ENCODE measurements at regions of chr16 and their contacts with region 1.

Region 1: GRCh38 chr16:22321339-22322001 is 24.3 kb downstream of the POLR3E start:
- DNase-seq: peak; percentile 81
- H3K4me3 ChIP-seq: no peak overlapping the region
- H3K27ac ChIP-seq: peak overlapping the region; percentile 67
- H3K4me1 ChIP-seq: peaks cover 14% of the 10 kb centered on the region
- H3K27me3 ChIP-seq: no peaks in the 10 kb centered on the region
- CTCF ChIP-seq: peak; percentile 72 to 79
- POLR2A ChIP-seq: no peak

Region 2: DNA sequence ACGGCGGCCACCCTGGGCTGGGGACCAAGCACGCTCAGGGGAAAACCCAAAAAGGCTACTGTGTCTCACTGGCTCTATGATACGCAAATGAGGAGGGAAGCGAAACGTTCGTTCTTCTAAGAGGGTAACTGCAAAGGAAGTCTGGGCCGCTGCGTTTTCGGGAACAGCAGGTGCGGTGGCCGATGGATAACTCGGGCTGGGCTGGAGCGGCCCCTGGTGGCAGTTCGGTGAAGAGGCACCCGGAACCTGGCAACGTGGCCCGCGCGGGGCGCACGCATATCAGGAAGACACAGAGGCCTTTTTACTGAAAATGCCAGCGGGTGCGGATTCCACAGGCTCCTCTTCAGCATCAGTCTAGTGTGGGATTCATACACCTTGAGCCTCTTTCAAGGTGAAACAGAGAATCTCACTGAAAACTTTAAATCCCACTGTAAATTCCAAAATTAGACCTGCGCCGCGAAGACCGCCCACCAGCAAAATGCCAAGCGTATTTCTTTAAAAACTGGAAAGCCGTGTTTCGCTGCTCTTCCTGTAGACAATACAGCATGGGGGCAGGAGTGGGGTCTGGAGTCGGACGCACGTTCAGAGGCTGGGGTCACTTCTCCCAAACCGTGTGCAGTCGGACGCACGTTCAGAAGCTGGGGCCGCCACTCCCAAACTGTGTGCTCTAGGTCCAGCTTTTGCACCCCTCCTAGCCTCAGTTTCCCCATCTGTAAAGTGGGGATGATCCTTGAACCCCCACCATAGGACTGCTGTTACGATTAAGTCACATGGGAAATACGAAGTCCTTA is 766.5 kb before region 1 on chr16:
- CTCF ChIA-PET with region 1: interaction called, 3 read pairs
- POLR2A ChIA-PET with region 1: no interaction called
- dilution Hi-C with region 1: no loop called
- intact Hi-C with region 1: loop called (anchors 1 kb)
- DNase-seq: peak; percentile 66
- H3K4me3 ChIP-seq: no peak overlapping the region
- H3K27ac ChIP-seq: no peak overlapping the region
- H3K4me1 ChIP-seq: no peaks in the 10 kb centered on the region
- H3K27me3 ChIP-seq: peaks cover 0 to 3% of the 10 kb centered on the region in 2 experiments
- CTCF ChIP-seq: peak; percentile 96 to 100
- POLR2A ChIP-seq: no peak

Region 3: DNA sequence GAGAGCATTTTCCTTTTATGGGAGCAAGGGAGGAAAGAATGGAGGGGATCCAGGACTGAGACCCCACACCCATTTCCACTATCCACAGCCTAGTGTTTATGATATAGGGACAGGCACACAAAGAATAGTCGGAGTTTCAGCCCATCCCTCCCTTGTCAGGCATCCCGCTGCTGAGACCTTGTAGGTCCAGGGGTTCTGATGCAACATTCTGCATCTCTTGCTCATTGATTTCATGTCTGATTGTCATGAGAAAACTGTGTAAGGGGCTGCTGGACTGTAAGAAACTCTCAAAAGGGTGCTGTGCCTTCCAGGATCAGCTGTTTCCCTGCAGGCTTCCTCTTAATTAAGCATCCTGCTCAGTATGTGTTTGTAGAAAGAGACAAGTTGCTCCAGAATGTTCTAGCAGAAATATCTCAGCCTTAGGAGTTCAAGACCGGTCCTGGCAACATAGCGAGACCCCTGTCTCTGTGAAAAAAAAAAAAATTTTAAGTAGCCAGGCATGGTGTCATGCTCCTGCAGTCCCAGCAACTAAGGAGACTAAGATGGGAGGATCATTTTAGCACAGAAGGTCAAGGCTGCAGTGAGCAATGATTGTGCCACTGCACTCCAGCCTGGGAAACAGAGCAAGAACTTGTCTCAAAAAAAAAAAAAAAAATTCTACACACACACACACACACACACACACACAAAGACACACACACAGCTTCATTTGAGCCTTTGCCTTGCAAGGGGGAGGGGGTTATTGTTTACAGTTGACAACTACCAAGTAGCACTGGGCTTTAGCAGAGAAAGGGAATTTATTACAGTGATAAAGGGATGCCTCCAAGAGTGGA is 29.4 kb before region 1 on chr16:
- CTCF ChIA-PET with region 1: no interaction called
- POLR2A ChIA-PET with region 1: no interaction called
- dilution Hi-C with region 1: no loop called
- intact Hi-C with region 1: no loop called
- DNase-seq: no peak
- H3K4me3 ChIP-seq: no peak overlapping the region
- H3K27ac ChIP-seq: no peak overlapping the region
- H3K4me1 ChIP-seq: no peaks in the 10 kb centered on the region
- H3K27me3 ChIP-seq: no peaks in the 10 kb centered on the region
- CTCF ChIP-seq: no peak
- POLR2A ChIP-seq: no peak

Region 4: DNA sequence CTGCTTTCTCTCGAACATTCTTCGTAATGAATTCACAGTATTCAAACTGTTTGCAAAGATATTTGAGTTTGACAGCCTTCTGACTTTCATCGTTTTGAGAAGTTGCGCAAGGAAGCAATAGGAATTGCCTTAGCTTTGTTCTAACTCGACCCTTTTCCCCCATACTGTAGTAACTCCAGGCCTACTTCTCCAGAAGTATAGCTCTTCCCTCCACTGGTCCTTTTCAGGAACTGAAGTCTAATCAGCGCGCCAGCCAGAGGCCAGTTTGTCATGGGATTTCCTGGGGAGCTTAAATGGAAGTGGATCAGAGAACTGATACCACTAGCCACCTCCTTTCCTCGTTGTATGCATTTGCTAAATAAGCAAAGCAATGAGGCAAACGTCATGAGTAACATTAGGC is 25.0 kb after region 1 on chr16:
- CTCF ChIA-PET with region 1: interaction called, 10 read pairs
- POLR2A ChIA-PET with region 1: no interaction called
- dilution Hi-C with region 1: no loop called
- intact Hi-C with region 1: no loop called
- DNase-seq: peak; percentile 46
- H3K4me3 ChIP-seq: no peak overlapping the region
- H3K27ac ChIP-seq: no peak overlapping the region
- H3K4me1 ChIP-seq: no peaks in the 10 kb centered on the region
- H3K27me3 ChIP-seq: no peaks in the 10 kb centered on the region
- CTCF ChIP-seq: no peak
- POLR2A ChIP-seq: no peak

Region 5: GRCh38 chr16:22353191-22353919 is 31.9 kb after region 1 on chr16:
- CTCF ChIA-PET with region 1: interaction called, 13 read pairs
- POLR2A ChIA-PET with region 1: no interaction called
- dilution Hi-C with region 1: no loop called
- intact Hi-C with region 1: no loop called
- DNase-seq: peak; percentile 28
- H3K4me3 ChIP-seq: no peak overlapping the region
- H3K27ac ChIP-seq: no peak overlapping the region
- H3K4me1 ChIP-seq: peaks cover 9% of the 10 kb centered on the region
- H3K27me3 ChIP-seq: no peaks in the 10 kb centered on the region
- CTCF ChIP-seq: no peak
- POLR2A ChIP-seq: no peak

Region 6: GRCh38 chr16:22402191-22402590 is 80.7 kb after region 1 on chr16:
- CTCF ChIA-PET with region 1: interaction called, 10 read pairs
- POLR2A ChIA-PET with region 1: no interaction called
- dilution Hi-C with region 1: no loop called
- intact Hi-C with region 1: no loop called
- DNase-seq: peak; percentile 58
- H3K4me3 ChIP-seq: peak overlapping the region in 2 of 3 experiments; percentile 35 to 39
- H3K27ac ChIP-seq: peak overlapping the region; percentile 92
- H3K4me1 ChIP-seq: peaks cover 24% of the 10 kb centered on the region
- H3K27me3 ChIP-seq: no peaks in the 10 kb centered on the region
- CTCF ChIP-seq: no peak
- POLR2A ChIP-seq: no peak

Region 7: GRCh38 chr16:22417019-22417418 is 95.5 kb after region 1 on chr16:
- CTCF ChIA-PET with region 1: no interaction called
- POLR2A ChIA-PET with region 1: no interaction called
- dilution Hi-C with region 1: no loop called
- intact Hi-C with region 1: no loop called
- DNase-seq: no peak
- H3K4me3 ChIP-seq: no peak overlapping the region
- H3K27ac ChIP-seq: no peak overlapping the region
- H3K4me1 ChIP-seq: no peaks in the 10 kb centered on the region
- H3K27me3 ChIP-seq: no peaks in the 10 kb centered on the region
- CTCF ChIP-seq: no peak
- POLR2A ChIP-seq: no peak

Region 8: GRCh38 chr16:22670551-22671041 is 349.1 kb after region 1 on chr16:
- CTCF ChIA-PET with region 1: no interaction called
- POLR2A ChIA-PET with region 1: no interaction called
- dilution Hi-C with region 1: no loop called
- intact Hi-C with region 1: loop called (anchors 10 kb)
- DNase-seq: no peak
- H3K4me3 ChIP-seq: no peak overlapping the region
- H3K27ac ChIP-seq: no peak overlapping the region
- H3K4me1 ChIP-seq: no peaks in the 10 kb centered on the region
- H3K27me3 ChIP-seq: peaks cover 2 to 6% of the 10 kb centered on the region in 2 experiments
- CTCF ChIP-seq: no peak
- POLR2A ChIP-seq: no peak

Measured in endothelial cell of umbilical vein (primary cell).